Activated T-helper 1 cell treated with anti-CD3 and anti-CD28 coated beads, Interleukin-12 subunit alpha, Interleukin-12 subunit beta, Interleukin-2, Interleukin-4 antibody, amounts not matched to agents 30 ng/mL and 10 ng/mL and 1 ng/mL, durations not matched to agents 14 hours and 24 hours and 36 hours (primary cell): ENCODE measurements at regions of chr2 and their contacts with region 1.

Region 1: GRCh38 chr2:60550178-60550983 is 3.1 kb downstream of the BCL11A start:
- DNase-seq: no peak
- H3K4me3 Mint-ChIP-seq: peak overlapping the region; percentile 80
- H3K27ac Mint-ChIP-seq: peak overlapping the region; percentile 29
- H3K4me1 Mint-ChIP-seq: peaks cover 20% of the 10 kb centered on the region
- H3K27me3 Mint-ChIP-seq: peaks cover 76% of the 10 kb centered on the region

Region 2: DNA sequence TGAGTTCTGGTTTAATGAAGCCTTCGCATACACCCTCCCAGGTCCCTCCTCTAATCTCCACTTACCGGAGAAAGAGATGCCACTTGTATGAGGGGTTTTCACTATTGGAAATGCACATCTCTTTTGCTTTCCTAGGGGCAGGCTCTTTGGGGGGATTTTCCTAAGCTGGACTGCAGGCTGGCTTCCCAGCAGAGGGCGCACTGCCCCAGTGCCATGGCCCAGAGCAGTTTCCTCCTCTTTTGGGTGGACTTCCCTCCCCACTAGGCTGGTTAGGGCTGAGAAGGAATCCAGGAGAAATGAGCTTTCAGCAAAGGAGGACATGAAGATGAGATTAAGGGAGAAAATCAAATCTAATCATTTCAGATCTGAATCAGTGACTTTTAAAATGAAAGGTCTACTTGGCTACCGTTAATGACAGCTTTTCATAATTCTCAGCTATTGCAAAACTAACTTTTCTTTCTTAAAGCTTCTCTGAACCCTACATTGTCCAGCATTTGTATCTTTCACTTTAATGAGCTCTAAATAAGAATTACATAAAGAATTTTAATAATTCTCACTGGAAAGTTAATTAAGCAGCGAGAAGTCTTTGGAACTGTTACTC is 1525.1 kb before region 1 on chr2:
- intact Hi-C with region 1: loop called (anchors 2 kb)
- DNase-seq: no peak
- H3K4me3 Mint-ChIP-seq: no peak overlapping the region
- H3K27ac Mint-ChIP-seq: no peak overlapping the region
- H3K4me1 Mint-ChIP-seq: no peaks in the 10 kb centered on the region
- H3K27me3 Mint-ChIP-seq: no peaks in the 10 kb centered on the region

Region 3: GRCh38 chr2:59301466-59302402 is 1248.6 kb before region 1 on chr2:
- intact Hi-C with region 1: loop called (anchors 2 kb)
- DNase-seq: peak; percentile 2
- H3K4me3 Mint-ChIP-seq: no peak overlapping the region
- H3K27ac Mint-ChIP-seq: no peak overlapping the region
- H3K4me1 Mint-ChIP-seq: no peaks in the 10 kb centered on the region
- H3K27me3 Mint-ChIP-seq: peaks cover 2% of the 10 kb centered on the region

Region 4: GRCh38 chr2:60597346-60597745 is 47.0 kb after region 1 on chr2:
- intact Hi-C with region 1: no loop called
- DNase-seq: no peak
- H3K4me3 Mint-ChIP-seq: no peak overlapping the region
- H3K27ac Mint-ChIP-seq: no peak overlapping the region
- H3K4me1 Mint-ChIP-seq: no peaks in the 10 kb centered on the region
- H3K27me3 Mint-ChIP-seq: peaks cover 7% of the 10 kb centered on the region

Region 5: GRCh38 chr2:60834270-60834962 is 284.0 kb after region 1 on chr2:
- intact Hi-C with region 1: no loop called
- DNase-seq: no peak
- H3K4me3 Mint-ChIP-seq: no peak overlapping the region
- H3K27ac Mint-ChIP-seq: peak overlapping the region; percentile 2
- H3K4me1 Mint-ChIP-seq: peaks cover 14% of the 10 kb centered on the region
- H3K27me3 Mint-ChIP-seq: peaks cover 5% of the 10 kb centered on the region

Region 6: DNA sequence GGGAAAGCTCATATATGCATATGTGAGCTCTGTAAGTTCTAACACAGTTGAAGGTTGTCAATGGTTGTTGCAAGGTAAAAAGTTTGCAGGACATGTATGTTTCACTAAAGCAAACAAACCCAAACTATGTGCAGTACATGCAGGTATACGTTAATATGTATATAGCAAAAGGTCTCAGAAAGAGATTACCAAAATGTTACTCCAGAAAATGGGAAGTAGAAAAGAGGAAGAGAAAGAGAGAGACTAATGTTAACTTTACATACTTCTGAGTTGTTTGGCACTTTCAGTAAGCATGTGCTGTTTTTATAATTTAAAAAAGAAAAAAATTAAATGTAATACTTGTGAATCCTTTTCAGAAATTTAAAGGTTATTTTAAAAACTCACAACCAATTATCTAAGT is 434.3 kb after region 1 on chr2:
- intact Hi-C with region 1: no loop called
- DNase-seq: no peak
- H3K4me3 Mint-ChIP-seq: no peak overlapping the region
- H3K27ac Mint-ChIP-seq: no peak overlapping the region
- H3K4me1 Mint-ChIP-seq: peaks cover 15% of the 10 kb centered on the region
- H3K27me3 Mint-ChIP-seq: no peaks in the 10 kb centered on the region